ENCODE measurements at regions of chr19 and their contacts with region 1.

Region 1: DNA sequence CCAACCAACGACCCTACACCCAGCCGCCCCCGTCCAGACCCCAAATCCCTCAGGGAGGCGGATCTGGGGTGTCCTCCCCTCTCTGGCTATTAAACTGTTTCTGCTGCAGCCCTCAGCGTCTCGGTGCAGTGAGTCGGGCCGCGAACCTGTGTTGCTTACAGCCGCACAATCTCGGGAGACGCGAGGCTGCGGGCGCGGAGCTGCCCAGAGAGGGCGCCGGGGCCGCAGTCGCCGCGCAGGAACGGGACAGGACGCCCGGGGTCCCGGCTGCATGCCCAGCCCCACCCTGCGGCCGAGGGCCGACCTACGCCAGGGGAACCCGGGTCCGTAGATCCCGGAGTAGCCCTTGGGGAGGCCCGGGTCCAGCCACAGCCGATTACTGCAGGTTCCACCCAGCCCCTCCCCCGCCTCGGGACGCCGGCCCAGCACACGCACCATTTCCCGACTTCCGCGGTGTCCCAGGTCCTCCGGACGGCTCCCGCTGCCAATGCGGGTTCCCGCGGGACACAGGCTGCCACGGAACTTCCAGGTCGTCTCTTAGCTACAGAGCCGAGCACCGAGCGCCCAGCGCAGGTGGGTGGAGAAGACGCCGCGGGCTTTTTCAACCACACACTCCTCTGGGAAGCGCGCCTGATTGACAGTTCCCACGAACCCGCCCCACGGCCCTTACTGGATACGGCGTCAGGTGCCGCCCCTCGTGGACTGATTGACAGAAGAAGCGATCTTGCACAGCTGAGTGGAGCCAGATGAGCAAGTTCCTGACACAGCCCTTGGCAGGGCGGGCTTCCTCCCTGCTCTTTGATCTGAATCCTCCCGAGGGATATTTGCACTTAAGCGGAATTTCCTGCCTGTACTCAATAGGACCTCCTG is at the start of gene ZNF799:
- DNase-seq: peak; percentile 97
- H3K4me3 ChIP-seq: peak within 1 kb of the TSS; percentile 80 to 87 (median 81)
- H3K27ac ChIP-seq: peak within 1 kb of the TSS; percentile 49
- H3K4me1 ChIP-seq: peaks cover 7% of the 10 kb centered on the region
- H3K27me3 ChIP-seq: no peaks in the 10 kb centered on the region
- CTCF ChIP-seq: peak in 1 of 2 donors; percentile 5
- POLR2A ChIP-seq: no peak
- total RNA-seq, gene ZNF799: 2.7 and 3.0 TPM in 2 replicates

Region 2: DNA sequence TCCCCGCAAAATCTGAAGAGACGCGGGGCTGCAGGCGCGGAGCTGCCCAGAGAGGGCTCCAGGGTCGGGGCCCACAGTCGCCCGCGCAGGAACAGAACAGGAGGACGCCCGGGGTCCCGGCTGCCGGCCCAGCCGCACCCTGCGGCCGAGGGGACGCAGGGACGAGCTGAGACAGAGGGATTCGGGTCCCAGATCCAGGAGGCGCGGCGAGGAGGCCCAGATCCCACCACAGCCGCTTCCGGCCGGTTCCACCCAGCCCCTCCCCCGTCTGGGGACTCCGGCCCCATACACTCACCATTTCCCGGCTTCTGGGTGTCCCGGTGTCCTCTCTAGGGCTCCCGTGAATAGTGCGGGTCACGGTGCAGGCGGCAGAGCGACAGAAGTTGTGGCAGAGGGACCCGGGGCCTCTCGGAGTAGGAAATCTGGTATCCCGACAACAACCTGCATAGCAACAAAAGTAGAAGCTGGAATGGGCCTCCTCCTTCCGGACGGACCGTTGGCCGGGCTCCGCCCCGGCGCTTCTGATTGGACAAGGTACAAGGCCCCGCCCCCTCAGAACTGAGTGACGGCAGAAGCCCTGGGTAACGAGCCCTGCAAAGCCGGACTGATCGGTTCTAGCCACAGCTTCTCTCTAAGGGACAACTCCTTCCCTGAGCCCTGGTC is 260.9 kb before region 1 on chr19 and contains the start of gene ZNF20:
- CTCF ChIA-PET with region 1: no interaction called
- POLR2A ChIA-PET with region 1: no interaction called
- dilution Hi-C with region 1: no loop called
- intact Hi-C with region 1: no loop called
- DNase-seq: peak; percentile 90
- H3K4me3 ChIP-seq: peak within 1 kb of the TSS; percentile 63 to 72 (median 68)
- H3K27ac ChIP-seq: peak within 1 kb of the TSS; percentile 30
- H3K4me1 ChIP-seq: no peaks in the 10 kb centered on the region
- H3K27me3 ChIP-seq: no peaks in the 10 kb centered on the region
- CTCF ChIP-seq: no peak
- POLR2A ChIP-seq: no peak
- total RNA-seq, gene ZNF20: 0.35 and 0.88 TPM in 2 replicates

Region 3: DNA sequence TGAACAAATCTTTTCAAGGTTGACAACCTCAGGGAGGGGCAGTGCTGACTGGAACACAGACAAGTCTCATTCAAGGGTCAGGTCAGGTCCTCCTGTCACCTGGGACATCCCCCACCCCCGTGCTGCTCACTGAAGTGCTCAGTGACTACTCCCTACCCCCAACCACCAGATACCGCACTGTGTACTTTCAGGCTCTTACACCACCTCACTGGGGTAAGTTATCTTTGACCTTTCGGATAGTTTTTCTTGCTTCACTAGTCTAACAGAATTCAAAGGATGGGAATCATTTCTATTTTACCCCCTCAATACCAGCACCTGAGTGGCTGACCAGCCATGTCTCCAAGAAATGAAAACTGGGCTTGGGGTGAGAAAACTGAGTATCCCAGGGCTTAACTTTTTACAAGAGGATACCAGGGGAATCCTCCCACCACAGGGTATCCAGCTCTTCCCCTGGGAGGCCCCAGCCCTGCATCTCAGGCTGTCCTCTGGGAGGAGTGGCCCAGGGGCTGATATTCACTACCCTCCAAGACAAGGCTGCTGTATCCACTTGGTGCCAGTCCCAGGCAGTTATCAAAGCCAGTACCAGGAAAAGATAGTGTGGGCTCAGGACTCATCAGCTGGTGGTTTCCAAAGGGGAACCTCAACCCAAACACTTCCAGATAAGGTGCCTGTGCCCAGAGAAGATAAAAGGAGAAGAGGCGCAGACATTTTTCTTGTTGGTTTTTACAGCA is 69.5 kb before region 1 on chr19:
- CTCF ChIA-PET with region 1: no interaction called
- POLR2A ChIA-PET with region 1: no interaction called
- dilution Hi-C with region 1: no loop called
- intact Hi-C with region 1: no loop called
- DNase-seq: no peak
- H3K4me3 ChIP-seq: no peak overlapping the region
- H3K27ac ChIP-seq: no peak overlapping the region
- H3K4me1 ChIP-seq: no peaks in the 10 kb centered on the region
- H3K27me3 ChIP-seq: no peaks in the 10 kb centered on the region
- CTCF ChIP-seq: no peak
- POLR2A ChIP-seq: no peak

Region 4: DNA sequence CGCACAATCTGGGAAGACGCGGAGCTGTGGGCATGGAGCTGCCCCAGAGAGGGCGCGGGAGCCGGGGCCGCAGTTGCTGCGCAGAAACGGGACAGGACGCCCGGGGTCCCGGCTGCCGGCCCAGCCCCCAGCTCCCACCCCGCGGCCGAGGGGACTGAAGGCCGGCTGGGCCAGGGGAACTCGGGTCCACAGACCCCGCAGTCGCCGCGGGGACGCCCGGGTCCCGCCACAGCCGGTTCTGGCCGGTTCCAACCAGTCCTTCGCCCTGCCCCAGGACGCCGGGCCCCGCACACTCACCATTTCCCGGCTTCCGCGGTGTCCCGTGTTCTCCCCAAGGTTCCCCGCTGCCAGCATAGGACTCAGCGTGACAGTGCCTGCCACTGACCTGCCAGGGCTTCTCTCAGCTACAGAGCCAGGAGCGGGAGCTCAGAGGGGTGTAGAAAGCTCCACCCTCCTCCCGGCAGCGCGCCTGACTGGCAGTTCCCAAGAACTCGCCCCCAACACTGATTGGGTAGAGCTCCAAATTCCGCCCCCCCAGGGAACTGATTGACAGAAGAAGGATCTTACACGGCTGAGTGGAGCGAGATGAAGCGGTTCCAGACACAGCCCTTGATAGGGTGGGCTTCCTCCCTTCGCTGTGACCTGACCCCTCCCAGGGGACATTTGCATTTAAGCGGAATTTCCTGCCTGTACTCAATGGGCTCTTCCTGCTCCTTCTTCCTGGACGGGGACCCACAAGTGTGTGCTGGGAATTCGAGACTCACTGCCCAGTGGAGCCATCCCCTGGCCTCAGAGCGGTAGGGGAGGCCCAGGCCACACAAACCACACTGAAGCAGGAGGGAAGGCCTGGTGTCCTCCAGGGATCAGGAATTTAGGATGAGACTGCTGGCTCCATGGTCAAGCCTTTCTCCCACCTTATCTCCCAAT is 35.4 kb before region 1 on chr19 and contains the start of gene ZNF442:
- CTCF ChIA-PET with region 1: no interaction called
- POLR2A ChIA-PET with region 1: no interaction called
- dilution Hi-C with region 1: no loop called
- intact Hi-C with region 1: loop called (anchors 2 kb)
- DNase-seq: peak; percentile 93
- H3K4me3 ChIP-seq: peak within 1 kb of the TSS; percentile 60 to 96 (median 73)
- H3K27ac ChIP-seq: peak within 1 kb of the TSS; percentile 57
- H3K4me1 ChIP-seq: no peaks in the 10 kb centered on the region
- H3K27me3 ChIP-seq: no peaks in the 10 kb centered on the region
- CTCF ChIP-seq: peak; percentile 35 to 66
- POLR2A ChIP-seq: peak; percentile 43
- total RNA-seq, gene ZNF442: 0.39 and 0.93 TPM in 2 replicates

Region 5: GRCh38 chr19:12484371-12485051 is 83.6 kb after region 1 on chr19 and contains the start of gene ZNF709:
- CTCF ChIA-PET with region 1: no interaction called
- POLR2A ChIA-PET with region 1: no interaction called
- dilution Hi-C with region 1: no loop called
- intact Hi-C with region 1: loop called (anchors 1 kb)
- DNase-seq: peak; percentile 95
- H3K4me3 ChIP-seq: peak within 1 kb of the TSS; percentile 73 to 77 (median 74)
- H3K27ac ChIP-seq: no peak within 1 kb of the TSS
- H3K4me1 ChIP-seq: peaks cover 7% of the 10 kb centered on the region
- H3K27me3 ChIP-seq: no peaks in the 10 kb centered on the region
- CTCF ChIP-seq: no peak
- POLR2A ChIP-seq: peak; percentile 42
- total RNA-seq, gene ZNF709: 1.4 and 1.8 TPM in 2 replicates

Measured in endothelial cell of umbilical vein (primary cell).